Activated CD4-positive, alpha-beta memory T cell treated with anti-CD3 and anti-CD28 coated beads for 36 hours (primary cell): ENCODE measurements at regions of chr12 and their contacts with region 1.

Region 1: GRCh38 chr12:22396253-22396652 is 61.7 kb upstream of the ST8SIA1 start:
- DNase-seq: peak; percentile 37
- H3K4me3 Mint-ChIP-seq: peak overlapping the region; percentile 61
- H3K27ac Mint-ChIP-seq: peak overlapping the region; percentile 75
- H3K4me1 Mint-ChIP-seq: peaks cover 43% of the 10 kb centered on the region
- H3K27me3 Mint-ChIP-seq: no peaks in the 10 kb centered on the region

Region 2: GRCh38 chr12:22164139-22164538 is 232.1 kb before region 1 on chr12:
- CTCF ChIA-PET with region 1: no interaction called
- POLR2A ChIA-PET with region 1: no interaction called
- intact Hi-C with region 1: loop called (anchors 2 kb)
- DNase-seq: peak; percentile 18
- H3K4me3 Mint-ChIP-seq: peak overlapping the region; percentile 9
- H3K27ac Mint-ChIP-seq: peak overlapping the region; percentile 65
- H3K4me1 Mint-ChIP-seq: peaks cover 40% of the 10 kb centered on the region
- H3K27me3 Mint-ChIP-seq: no peaks in the 10 kb centered on the region

Region 3: DNA sequence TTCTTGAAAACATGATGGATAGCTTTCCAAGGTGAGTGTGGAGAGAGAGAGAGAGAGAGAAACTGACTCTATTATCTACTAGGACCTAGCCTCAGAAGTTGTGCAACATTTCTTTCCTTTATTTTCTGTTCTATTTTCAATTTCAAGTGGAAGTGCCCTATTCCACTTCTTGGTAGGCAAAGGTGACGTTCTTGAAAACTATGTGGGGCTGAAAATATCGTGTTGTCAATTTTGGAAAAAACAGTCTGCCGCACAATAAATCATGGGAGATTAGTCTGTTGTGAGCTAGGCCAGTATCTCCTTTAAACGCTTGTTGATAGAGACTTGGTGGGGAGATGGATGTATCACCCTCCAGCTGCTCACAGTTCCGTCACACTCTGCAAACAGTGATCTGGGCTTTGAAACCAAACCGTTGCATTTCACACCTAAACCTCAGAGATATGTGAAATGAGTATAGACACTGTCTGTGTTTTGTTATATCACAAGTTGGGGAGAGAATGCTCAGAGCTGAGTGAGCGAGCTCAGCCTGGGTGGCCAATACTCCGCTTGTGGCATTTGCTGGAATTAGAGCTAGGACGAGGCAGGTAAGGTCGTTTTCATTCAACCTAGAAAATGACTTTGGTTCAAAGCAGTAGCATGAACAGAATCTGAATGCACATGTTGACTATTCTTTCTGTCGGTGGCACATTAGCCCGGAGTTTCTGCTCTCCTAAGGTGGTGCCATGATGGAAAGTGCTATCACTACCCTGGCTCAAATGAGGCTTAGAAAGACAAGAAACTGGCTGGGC is 13.3 kb after region 1 on chr12:
- CTCF ChIA-PET with region 1: interaction called, 4 read pairs
- POLR2A ChIA-PET with region 1: interaction called, 11 read pairs
- intact Hi-C with region 1: loop called (anchors 1 kb)
- DNase-seq: peak; percentile 78
- H3K4me3 Mint-ChIP-seq: peak overlapping the region; percentile 69
- H3K27ac Mint-ChIP-seq: peak overlapping the region; percentile 88
- H3K4me1 Mint-ChIP-seq: peaks cover 49% of the 10 kb centered on the region
- H3K27me3 Mint-ChIP-seq: no peaks in the 10 kb centered on the region

Region 4: GRCh38 chr12:22437031-22437780 is 41.0 kb after region 1 on chr12:
- CTCF ChIA-PET with region 1: no interaction called
- POLR2A ChIA-PET with region 1: no interaction called
- intact Hi-C with region 1: loop called (anchors 5 kb)
- DNase-seq: no peak
- H3K4me3 Mint-ChIP-seq: no peak overlapping the region
- H3K27ac Mint-ChIP-seq: no peak overlapping the region
- H3K4me1 Mint-ChIP-seq: peaks cover 26% of the 10 kb centered on the region
- H3K27me3 Mint-ChIP-seq: no peaks in the 10 kb centered on the region